AG04449 (cell line): ENCODE measurements at regions of chr15 and their contacts with region 1.

Region 1: DNA sequence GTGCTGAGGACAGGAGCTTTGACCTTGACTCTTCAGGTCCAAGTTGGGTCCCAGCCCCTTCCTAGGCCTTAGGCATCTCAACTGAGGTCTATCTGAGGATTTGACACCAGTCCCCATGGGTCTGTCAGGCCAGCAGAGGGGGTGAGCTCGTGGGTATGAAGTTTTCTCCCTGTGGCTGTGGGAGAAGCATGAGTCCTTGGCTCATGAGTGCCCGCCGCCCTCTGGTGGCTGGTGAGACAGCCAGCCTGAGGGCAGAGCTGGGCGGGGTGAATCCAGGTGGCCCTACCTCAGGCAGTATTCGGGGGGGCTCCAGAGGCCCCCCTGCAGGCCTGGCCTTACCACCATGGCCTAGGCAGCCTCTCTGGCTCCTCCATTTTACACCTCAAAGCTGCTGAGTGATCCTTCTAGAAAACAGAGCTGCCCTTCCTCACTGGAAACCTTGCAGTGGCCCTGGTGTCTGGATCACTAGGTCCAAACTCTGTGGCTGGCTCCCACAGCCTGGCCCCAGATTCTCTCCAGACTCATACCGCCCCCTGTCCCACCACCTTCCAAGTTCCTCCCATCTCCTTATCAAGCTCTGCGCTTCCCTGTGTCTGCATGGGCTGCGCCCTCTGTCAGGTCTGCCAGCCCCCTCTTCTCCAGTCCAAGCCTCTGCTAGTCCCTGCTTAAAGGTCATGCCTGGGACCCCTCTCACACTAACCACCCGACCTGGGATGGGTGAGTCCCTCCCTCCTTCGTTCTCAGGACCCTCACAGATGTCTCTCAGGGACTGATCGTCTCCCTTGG is 16.1 kb downstream of the SH2D7 start:
- DNase-seq: no peak
- H3K4me3 ChIP-seq: no peak overlapping the region
- CTCF ChIP-seq: peak; percentile 98

Region 2: DNA sequence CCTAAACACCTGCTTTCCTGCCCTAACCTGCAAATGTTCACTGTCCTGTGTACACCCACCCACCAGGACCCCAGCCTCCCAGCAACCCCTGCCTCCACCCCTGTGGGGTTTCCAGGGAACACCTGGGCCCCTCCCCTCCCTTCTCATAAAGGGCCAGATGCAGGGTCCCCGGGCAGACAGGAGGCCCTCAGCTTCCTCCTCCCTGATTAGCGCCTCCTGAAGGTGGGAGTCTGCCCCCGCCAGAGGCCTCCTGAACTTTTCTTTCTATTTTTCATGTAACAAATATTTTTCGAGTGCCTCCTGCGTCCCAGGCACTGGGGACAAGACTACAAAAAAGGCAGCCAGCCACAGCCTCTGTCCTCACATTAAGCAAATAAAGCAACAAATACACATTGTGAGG is 340.4 kb before region 1 on chr15:
- CTCF ChIA-PET with region 1: no interaction called
- POLR2A ChIA-PET with region 1: no interaction called
- DNase-seq: no peak
- H3K4me3 ChIP-seq: no peak overlapping the region
- CTCF ChIP-seq: no peak

Region 3: GRCh38 chr15:77959432-77959879 is 149.0 kb before region 1 on chr15:
- CTCF ChIA-PET with region 1: interaction called, 538 read pairs
- POLR2A ChIA-PET with region 1: interaction called, 3 read pairs
- DNase-seq: no peak
- H3K4me3 ChIP-seq: peak overlapping the region; percentile 34
- CTCF ChIP-seq: peak; percentile 92

Region 4: DNA sequence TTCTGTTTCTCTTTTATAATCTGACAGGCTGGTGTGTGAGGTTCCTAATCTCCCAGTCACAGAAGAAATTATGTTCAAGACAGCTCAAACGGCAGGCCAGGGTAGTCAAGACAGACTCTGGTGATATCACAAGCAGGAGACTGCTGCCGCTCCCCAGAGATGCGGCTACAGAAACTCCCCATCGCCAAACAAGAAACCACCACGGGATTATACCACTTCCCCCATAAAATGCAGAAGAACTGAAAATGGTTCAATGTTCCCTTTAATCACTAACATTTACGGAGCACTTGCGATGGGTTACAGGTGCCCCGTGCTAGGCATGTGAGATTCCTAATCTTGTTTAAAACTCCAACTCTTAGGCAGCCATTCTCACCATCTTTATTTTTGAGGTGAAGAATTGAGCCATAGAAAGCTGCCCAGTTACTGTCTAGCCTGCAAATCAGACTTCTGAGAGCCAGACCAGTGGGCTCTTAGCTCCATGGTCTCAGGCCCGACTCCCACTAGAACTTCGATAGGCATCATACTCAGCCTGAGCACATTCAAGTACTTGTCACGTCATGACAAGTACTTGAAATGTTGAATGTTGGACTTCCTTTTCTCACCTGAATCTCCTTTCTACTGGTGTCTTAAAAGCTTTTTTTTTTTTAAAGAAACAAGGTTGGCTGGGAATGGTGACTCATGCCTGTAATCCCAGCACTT is 89.4 kb before region 1 on chr15:
- CTCF ChIA-PET with region 1: interaction called, 11 read pairs
- POLR2A ChIA-PET with region 1: no interaction called
- DNase-seq: no peak
- H3K4me3 ChIP-seq: no peak overlapping the region
- CTCF ChIP-seq: no peak

Region 5: GRCh38 chr15:78059110-78059844 is 49.2 kb before region 1 on chr15:
- CTCF ChIA-PET with region 1: interaction called, 53 read pairs
- POLR2A ChIA-PET with region 1: no interaction called
- DNase-seq: no peak
- H3K4me3 ChIP-seq: no peak overlapping the region
- CTCF ChIP-seq: no peak

Region 6: GRCh38 chr15:78093242-78094020 is 15.1 kb before region 1 on chr15:
- CTCF ChIA-PET with region 1: interaction called, 110 read pairs
- POLR2A ChIA-PET with region 1: no interaction called
- DNase-seq: peak; percentile 80
- H3K4me3 ChIP-seq: no peak overlapping the region
- CTCF ChIP-seq: no peak

Region 7: GRCh38 chr15:78195735-78196201 is 87.3 kb after region 1 on chr15:
- CTCF ChIA-PET with region 1: interaction called, 48 read pairs
- POLR2A ChIA-PET with region 1: no interaction called
- DNase-seq: no peak
- H3K4me3 ChIP-seq: no peak overlapping the region
- CTCF ChIP-seq: peak; percentile 64